Caco-2 (cell line): ENCODE measurements at regions of chr17 and their contacts with region 1.

Region 1: DNA sequence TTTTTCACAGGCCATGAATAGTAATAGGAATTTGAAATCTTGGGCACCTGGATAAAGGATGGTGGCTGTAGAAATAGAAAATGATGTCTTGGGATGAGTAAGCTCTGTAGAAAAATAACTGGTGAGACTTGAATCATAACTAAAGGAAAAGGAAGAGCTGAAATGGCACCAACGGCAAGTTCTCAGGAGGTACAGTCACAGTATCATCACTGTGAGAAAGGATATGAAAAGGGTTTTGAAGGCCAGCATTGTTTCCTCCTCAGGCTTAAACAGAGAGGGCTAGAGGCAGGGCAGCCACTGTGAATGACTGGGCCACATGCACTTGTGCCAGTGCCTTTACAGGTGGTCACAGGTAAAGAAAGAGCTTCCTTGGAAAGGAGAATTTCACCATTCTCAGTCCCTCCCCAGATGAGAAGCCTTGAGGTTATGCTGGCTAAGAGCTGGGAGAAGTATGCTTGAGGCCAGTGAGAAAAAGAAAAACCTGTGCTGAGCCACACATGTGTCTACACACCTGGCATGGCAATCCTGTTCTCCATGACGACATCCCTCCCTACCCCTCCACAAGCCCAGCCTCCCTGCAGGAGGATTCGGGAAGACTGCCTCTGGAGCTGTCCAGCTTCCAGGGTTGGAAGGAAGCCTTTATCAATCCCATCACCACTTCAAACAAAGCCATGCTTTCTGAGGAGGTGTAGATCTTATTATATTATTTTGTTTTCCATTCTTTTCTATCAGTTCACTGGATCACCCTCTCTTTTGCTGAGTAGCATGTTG is 3.8 kb upstream of the ANKFN1 start:
- DNase-seq: no peak
- H3K4me3 ChIP-seq: no peak overlapping the region
- H3K4me3 Mint-ChIP-seq: no peak overlapping the region
- H3K27ac Mint-ChIP-seq: peak overlapping the region; percentile 50
- H3K4me1 ChIP-seq: peaks cover 64% of the 10 kb centered on the region
- H3K4me1 Mint-ChIP-seq: peaks cover 38% of the 10 kb centered on the region
- H3K27me3 ChIP-seq: no peaks in the 10 kb centered on the region
- H3K27me3 Mint-ChIP-seq: no peaks in the 10 kb centered on the region
- CTCF ChIP-seq: no peak

Region 2: DNA sequence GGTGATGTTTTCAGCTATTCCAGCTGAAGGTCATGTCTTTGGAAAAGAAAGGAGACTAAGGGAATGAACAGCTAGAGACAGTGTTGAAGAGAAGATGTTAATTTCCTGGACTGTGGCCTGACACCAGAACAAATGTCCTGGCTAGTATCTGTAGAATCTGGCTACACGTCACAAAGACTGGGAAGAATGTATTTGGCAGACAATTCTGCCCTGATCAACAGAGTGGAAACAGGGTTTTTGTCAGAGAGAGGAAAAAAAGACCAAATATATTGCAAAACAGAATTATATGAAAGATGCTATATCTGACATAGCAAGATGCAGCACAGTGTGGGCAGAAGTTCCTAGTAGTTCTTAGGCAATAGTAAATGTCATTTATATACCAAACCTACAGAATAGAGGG is 13.2 kb before region 1 on chr17:
- CTCF ChIA-PET with region 1: no interaction called
- POLR2A ChIA-PET with region 1: no interaction called
- intact Hi-C with region 1: loop called (anchors 1 kb)
- DNase-seq: no peak
- H3K4me3 ChIP-seq: no peak overlapping the region
- H3K4me3 Mint-ChIP-seq: no peak overlapping the region
- H3K27ac Mint-ChIP-seq: peak overlapping the region; percentile 51
- H3K4me1 ChIP-seq: peaks cover 35% of the 10 kb centered on the region
- H3K4me1 Mint-ChIP-seq: peaks cover 24% of the 10 kb centered on the region
- H3K27me3 ChIP-seq: no peaks in the 10 kb centered on the region
- H3K27me3 Mint-ChIP-seq: no peaks in the 10 kb centered on the region
- CTCF ChIP-seq: no peak

Region 3: DNA sequence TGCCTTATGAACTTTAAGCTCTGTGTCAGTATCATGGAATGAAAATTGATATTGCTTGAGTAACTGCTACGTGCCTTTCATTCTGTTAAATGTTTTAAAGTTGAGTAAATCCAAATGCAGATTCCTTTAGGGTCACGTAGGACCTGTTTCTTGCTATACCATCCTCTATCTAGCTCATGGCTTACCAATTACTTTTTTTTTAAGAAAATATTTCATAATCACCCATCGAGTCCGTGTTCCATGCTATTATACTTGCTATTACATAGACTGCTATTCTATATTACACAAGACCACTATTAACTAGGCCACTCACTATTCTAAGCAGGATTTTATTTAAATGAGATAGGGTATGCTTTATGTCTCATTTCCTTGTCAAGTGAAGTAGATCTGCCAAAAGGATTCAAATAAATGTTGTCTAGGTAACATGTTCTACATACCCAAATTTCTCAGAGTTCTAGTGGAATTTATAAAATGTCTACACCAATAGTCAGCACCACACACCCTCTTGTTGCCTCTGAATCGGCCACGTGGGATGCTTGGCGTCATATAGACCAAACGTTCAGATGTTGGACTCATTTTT is 15.7 kb after region 1 on chr17:
- CTCF ChIA-PET with region 1: no interaction called
- POLR2A ChIA-PET with region 1: no interaction called
- intact Hi-C with region 1: loop called (anchors 1 kb)
- DNase-seq: no peak
- H3K4me3 ChIP-seq: no peak overlapping the region
- H3K4me3 Mint-ChIP-seq: no peak overlapping the region
- H3K27ac Mint-ChIP-seq: no peak overlapping the region
- H3K4me1 ChIP-seq: peaks cover 15% of the 10 kb centered on the region
- H3K4me1 Mint-ChIP-seq: peaks cover 7% of the 10 kb centered on the region
- H3K27me3 ChIP-seq: no peaks in the 10 kb centered on the region
- H3K27me3 Mint-ChIP-seq: no peaks in the 10 kb centered on the region
- CTCF ChIP-seq: no peak